A549 (cell line): ENCODE measurements at regions of chr20 and their contacts with region 1.

Region 1: DNA sequence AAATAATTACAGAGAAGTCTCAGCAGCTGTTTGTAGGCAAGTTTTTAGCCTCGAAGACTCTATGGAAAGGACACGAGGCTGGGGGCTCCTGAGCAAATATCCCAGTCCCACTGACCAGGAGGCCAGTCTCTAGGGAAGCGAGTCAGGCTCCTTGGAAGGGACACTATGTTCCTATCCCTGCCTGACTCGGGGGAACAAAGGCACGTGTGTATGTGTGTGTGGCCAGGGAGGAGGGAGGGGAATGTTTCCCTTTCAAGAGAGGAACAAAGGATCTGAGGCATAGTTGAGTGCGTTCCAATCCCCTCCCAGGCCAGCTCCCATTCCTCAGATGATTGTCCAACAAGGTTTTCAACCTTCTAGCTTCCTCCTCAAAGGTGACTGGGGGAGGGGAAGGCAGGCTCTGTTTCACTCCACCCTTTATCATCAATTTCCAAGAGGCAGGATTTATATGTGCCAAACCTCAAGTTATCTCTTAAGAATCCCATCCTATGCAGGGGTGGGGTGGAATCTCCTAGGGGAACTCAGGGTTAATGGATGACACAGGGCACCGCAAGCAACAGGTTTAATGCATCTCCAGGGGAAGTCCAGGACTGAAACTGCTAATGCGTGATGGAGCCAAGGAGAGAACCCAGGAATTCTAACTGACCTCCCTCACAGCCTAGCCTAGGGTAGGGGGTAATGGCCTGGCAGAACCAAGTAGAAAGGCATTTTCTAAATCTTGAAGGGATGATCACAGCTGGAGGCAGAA is 9.9 kb downstream of the BCL2L1 start:
- DNase-seq: peak; percentile 80 to 95
- ATAC-seq: peak; percentile 63 to 77
- H3K4me3 ChIP-seq: peak overlapping the region; percentile 13; the same call in 1 of the 3 replicates
- H3K27ac ChIP-seq: peak overlapping the region; percentile 95 to 96
- H3K4me1 ChIP-seq: peaks cover 96% of the 10 kb centered on the region
- CTCF ChIP-seq: no peak
- EP300 ChIP-seq: peak; percentile 82 to 96; a peak in 4 of 5 replicates
- POLR2A ChIP-seq: no peak
- RAD21 ChIP-seq: peak; percentile 1 to 29; a peak in 1 of 5 replicates

Region 2: GRCh38 chr20:31698803-31699718 is 13.7 kb before region 1 on chr20:
- CTCF ChIA-PET with region 1: interaction called, 19 read pairs
- POLR2A ChIA-PET with region 1: interaction called, 30 read pairs
- DNase-seq: peak; percentile 63 to 87
- ATAC-seq: peak; percentile 59 to 74
- H3K4me3 ChIP-seq: no peak overlapping the region
- H3K27ac ChIP-seq: peak overlapping the region; percentile 89 to 95
- H3K4me1 ChIP-seq: peaks cover 100% of the 10 kb centered on the region
- CTCF ChIP-seq: no peak
- EP300 ChIP-seq: peak; percentile 39 to 58; a peak in 2 of 5 replicates
- POLR2A ChIP-seq: no peak
- RAD21 ChIP-seq: no peak